GM12878 (cell line): ENCODE measurements at regions of chr14 and their contacts with region 1.

Region 1: DNA sequence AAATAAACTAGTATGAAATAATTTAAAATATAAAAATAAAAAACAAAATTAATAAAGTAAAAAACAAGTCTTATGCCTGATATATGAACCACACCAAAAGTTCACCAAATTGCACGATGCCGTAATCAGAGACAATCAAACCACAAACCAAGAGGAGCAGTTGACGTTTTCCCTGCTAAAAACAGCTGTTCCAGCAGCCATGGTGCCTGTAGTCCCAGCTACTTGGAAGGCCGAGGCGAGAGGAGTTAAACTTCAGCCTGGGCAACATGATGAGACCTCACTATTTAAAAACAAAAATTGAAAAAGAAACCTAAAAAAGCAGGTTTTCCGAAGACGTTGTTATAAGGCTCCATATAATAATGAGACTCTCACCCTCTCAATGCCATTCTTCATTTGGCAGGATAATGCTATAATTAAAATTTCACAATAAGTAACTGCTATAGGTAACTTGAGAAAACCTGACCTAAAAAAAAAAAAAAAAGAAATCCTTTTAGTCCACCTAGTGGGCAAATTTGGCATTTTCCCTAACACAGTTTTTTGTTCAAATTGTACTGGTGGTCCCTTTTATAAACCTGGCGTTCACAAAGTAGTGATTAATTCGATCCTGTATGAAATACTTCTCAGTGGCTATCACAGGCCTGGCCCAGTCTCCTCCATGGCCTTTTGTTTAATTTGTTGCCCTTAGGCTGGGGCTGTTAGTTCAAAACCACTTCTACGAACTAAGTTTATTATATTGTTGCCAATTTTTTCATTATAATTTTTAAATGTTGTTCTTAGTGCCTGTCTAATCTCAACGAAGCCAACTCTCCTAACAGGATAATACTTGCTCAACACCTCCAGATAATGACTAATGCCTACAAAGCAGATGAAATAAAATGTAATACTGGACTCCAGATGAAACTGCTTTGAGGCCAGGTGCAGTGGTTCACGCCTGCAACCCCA is 62.1 kb downstream of the TNFAIP2 start:
- DNase-seq: no peak
- ATAC-seq: peak; percentile 41
- H3K4me3 ChIP-seq: no peak overlapping the region
- H3K27ac ChIP-seq: no peak overlapping the region
- H3K4me1 ChIP-seq: no peaks in the 10 kb centered on the region
- H3K27me3 ChIP-seq: peaks cover 0 to 2% of the 10 kb centered on the region in 2 experiments; a peak in 1 of 4 replicates
- CTCF ChIP-seq: peak; percentile 48 to 67 (median 55); a peak in 5 of 6 replicates
- EP300 ChIP-seq: no peak
- POLR2A ChIP-seq: no peak
- RAD21 ChIP-seq: peak; percentile 62

Region 2: DNA sequence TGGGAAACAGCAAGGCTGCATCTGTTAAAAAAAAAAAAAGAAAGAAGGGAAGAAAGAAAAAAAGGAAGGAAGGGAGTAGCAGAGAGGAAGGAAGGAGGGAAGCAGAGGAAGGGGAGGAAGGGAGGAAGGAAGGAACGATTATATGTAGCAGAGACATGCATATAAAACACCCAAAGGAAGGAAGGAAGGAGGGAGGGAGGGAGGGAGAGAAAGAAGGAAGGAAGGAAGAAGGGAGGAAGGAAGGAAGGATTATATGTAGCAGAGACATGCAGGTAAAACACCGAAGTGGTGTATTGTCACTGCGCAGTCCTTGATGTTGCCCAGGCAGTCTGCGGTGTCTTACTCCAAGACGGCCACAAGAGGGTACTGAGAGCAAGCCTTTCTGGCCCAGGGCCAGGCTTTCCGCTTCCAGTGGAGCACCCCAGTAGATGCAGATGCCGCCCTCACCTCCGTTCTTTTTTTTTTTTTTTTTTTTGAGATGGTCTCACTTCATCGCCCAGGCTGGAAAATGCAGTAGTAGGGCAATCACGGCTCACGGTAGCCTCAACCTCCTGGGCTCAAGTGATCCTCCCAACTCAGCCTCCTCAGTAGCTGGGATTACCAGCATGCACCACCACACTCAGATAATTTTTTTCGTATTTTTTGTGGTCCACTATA is 107.1 kb before region 1 on chr14:
- CTCF ChIA-PET with region 1: interaction called, 14 read pairs
- POLR2A ChIA-PET with region 1: no interaction called
- RAD21 ChIA-PET with region 1: interaction called, 3 read pairs
- SMC1A ChIA-PET with region 1: interaction called, 8 read pairs
- in situ Hi-C with region 1: no loop called
- intact Hi-C with region 1: loop called (anchors 2 kb)
- DNase-seq: peak; percentile 48
- ATAC-seq: peak; percentile 74
- H3K4me3 ChIP-seq: no peak overlapping the region
- H3K27ac ChIP-seq: no peak overlapping the region
- H3K4me1 ChIP-seq: peaks cover 8% of the 10 kb centered on the region
- H3K27me3 ChIP-seq: no peaks in the 10 kb centered on the region; a peak in 1 of 4 replicates
- CTCF ChIP-seq: peak; percentile 75 to 93 (median 86)
- EP300 ChIP-seq: no peak
- POLR2A ChIP-seq: no peak
- RAD21 ChIP-seq: peak; percentile 83